Cardiac septum (tissue), 1 donor: ENCODE measurements at regions of chr2 and their contacts with region 1.

Region 1: GRCh38 chr2:198296665-198297308 is 492.4 kb downstream of the PLCL1 start:
- DNase-seq: no peak

Region 2: DNA sequence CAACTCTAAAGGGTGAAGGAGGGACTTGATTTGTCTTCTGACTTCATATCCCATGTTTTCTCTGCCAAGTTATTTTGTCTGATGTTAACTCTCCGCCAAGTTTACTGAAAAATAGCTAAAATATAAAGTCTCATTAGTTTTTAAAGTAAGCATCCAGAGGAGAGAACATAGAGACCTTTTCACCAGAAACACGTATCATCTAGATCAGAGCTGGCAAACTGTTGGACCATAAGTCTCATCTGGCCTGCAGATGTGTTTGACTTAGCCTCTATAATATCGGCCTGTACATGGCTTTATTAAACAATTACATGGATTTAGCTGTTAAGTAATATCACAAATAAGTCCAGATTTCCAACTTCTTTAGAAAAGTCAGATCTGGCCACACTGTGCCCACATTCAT is 309.8 kb before region 1 on chr2:
- intact Hi-C with region 1: loop called (anchors 10 kb)
- DNase-seq: no peak

Region 3: DNA sequence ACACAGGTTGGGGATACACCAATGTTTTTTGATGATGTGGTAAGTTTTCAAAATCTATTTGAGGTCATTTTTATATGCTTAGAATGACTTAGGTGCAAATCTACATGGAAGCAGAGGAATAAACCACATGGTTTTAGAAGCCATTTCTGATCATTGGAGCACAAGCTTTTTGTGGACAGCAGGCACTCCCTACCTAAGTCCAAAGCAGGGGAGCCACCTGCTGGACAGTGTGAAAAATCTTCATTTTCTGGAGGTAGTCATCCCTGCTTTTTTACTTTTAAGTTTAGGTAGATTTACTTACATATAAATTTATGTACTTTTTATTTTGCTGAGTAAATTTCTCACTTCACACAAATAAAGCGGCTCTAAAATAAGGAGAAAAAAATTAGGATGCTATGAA is 169.2 kb before region 1 on chr2:
- intact Hi-C with region 1: loop called (anchors 2 kb)
- DNase-seq: peak; percentile 78

Region 4: DNA sequence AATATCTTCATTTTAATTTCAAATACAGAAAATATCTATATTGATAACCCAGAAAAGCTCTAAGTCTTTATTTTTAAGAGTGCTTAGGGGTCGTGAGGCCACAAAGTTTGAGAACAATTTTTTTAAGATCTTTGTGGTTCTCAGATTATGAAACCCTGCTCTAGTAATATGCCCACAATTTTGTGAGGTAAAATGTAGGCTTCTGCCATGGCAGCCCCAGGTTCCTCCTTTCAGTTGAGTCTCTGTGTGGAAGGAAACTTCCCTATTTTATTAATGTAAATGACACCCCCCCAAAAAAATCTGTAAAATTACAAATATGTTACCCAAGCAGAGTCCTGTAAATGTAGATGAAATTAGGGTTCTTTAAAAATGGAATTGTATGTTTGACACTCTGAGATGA is 560.5 kb after region 1 on chr2:
- intact Hi-C with region 1: no loop called
- DNase-seq: no peak